CD8-positive, alpha-beta T cell (primary cell): ENCODE measurements at regions of chr18 and their contacts with region 1.

Region 1: DNA sequence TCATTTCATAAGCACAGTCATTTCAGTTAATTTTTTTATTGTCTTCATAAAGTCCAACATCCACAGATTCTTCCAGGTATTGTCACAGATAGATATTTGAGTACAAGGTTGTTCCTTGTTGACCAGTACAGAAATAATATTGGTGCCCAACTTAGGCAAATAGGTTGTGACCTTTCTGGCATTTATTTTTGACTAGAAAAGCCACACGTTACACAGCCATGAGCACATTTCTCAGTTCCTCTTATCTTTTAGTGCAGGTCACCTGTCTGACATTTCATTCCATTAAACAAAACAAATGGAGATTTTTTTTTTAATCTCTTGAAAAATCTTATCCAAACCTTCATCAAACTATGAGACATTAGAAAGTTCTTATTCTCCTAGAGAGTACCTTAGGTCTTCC is 428.8 kb downstream of the ZNF521 start:
- DNase-seq: no peak
- ATAC-seq: no peak
- H3K4me3 ChIP-seq: no peak overlapping the region
- H3K4me3 Mint-ChIP-seq: no peak overlapping the region
- H3K27ac ChIP-seq: no peak overlapping the region
- H3K27ac Mint-ChIP-seq: no peak overlapping the region
- H3K4me1 ChIP-seq: no peaks in the 10 kb centered on the region
- H3K4me1 Mint-ChIP-seq: no peaks in the 10 kb centered on the region
- H3K27me3 ChIP-seq: no peaks in the 10 kb centered on the region
- H3K27me3 Mint-ChIP-seq: no peaks in the 10 kb centered on the region
- CTCF ChIP-seq: no peak

Region 2: DNA sequence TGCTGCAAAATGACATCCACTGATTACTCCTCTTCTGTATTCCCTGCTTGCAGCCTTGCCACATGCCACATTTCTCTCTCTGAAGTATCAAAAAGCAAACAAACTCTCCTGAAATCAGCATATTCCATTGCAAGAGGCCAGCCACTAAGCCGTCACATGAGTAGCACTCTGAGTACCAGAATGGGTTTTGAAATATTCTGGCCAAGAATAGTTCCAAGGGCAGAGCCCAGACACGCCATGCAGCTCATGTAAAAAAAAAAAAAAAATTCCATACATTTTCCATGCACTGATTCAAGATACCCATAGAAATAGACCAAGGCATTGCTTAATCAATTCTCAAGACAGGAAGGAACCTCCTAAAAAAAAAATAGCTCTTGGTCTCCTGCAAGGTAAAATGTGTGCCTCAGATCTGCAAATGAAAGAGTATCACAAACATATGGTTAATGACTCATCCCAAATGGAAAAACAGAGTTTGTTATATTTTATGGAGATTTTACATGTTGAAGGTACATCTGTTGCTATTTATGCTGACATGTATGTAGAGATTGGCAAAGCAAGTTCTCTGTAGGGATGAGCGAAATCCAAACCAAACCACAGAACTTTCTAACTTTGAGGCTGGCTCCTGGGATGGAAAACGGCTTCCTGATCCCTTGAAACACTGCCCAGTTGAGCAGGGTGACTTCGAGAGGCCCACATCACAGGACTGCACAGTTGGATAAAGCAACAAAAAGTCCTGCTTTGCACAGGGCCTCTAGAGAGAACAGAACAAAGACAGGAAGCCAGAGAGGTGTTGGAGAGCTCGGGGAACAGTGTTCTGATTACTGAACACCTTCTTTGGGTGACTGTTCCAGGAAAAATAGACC is 82.6 kb after region 1 on chr18:
- CTCF ChIA-PET with region 1: no interaction called
- POLR2A ChIA-PET with region 1: no interaction called
- intact Hi-C with region 1: loop called in 1 of 2 experiments (anchors 10 kb)
- DNase-seq: no peak
- ATAC-seq: no peak
- H3K4me3 ChIP-seq: no peak overlapping the region
- H3K4me3 Mint-ChIP-seq: no peak overlapping the region
- H3K27ac ChIP-seq: no peak overlapping the region
- H3K27ac Mint-ChIP-seq: no peak overlapping the region
- H3K4me1 ChIP-seq: no peaks in the 10 kb centered on the region
- H3K4me1 Mint-ChIP-seq: no peaks in the 10 kb centered on the region
- H3K27me3 ChIP-seq: no peaks in the 10 kb centered on the region
- H3K27me3 Mint-ChIP-seq: no peaks in the 10 kb centered on the region
- CTCF ChIP-seq: no peak